ENCODE measurements at regions of chr4 and their contacts with region 1.

Region 1: GRCh38 chr4:48499551-48500066 is 9.6 kb downstream of the ZAR1 start:
- DNase-seq: no peak
- H3K4me3 Mint-ChIP-seq: no peak overlapping the region
- H3K27ac Mint-ChIP-seq: no peak overlapping the region
- H3K4me1 Mint-ChIP-seq: peaks cover 16% of the 10 kb centered on the region
- H3K27me3 Mint-ChIP-seq: no peaks in the 10 kb centered on the region

Region 2: GRCh38 chr4:48041535-48042137 is 458.0 kb before region 1 on chr4:
- CTCF ChIA-PET with region 1: no interaction called
- intact Hi-C with region 1: loop called (anchors 5 kb)
- DNase-seq: no peak
- H3K4me3 Mint-ChIP-seq: no peak overlapping the region
- H3K27ac Mint-ChIP-seq: no peak overlapping the region
- H3K4me1 Mint-ChIP-seq: peaks cover 72% of the 10 kb centered on the region
- H3K27me3 Mint-ChIP-seq: no peaks in the 10 kb centered on the region

Region 3: GRCh38 chr4:48429709-48430474 is 69.7 kb before region 1 on chr4:
- CTCF ChIA-PET with region 1: no interaction called
- intact Hi-C with region 1: loop called (anchors 1 kb)
- DNase-seq: peak; percentile 16
- H3K4me3 Mint-ChIP-seq: no peak overlapping the region
- H3K27ac Mint-ChIP-seq: no peak overlapping the region
- H3K4me1 Mint-ChIP-seq: peaks cover 49% of the 10 kb centered on the region
- H3K27me3 Mint-ChIP-seq: no peaks in the 10 kb centered on the region

Region 4: GRCh38 chr4:48898733-48899431 is 399.3 kb after region 1 on chr4:
- CTCF ChIA-PET with region 1: no interaction called
- intact Hi-C with region 1: loop called (anchors 2 kb)
- DNase-seq: no peak
- H3K4me3 Mint-ChIP-seq: peak overlapping the region; percentile 16
- H3K27ac Mint-ChIP-seq: peak overlapping the region; percentile 77
- H3K4me1 Mint-ChIP-seq: peaks cover 35% of the 10 kb centered on the region
- H3K27me3 Mint-ChIP-seq: no peaks in the 10 kb centered on the region

Measured in activated naive CD4-positive, alpha-beta T cell treated with anti-CD3 and anti-CD28 coated beads for 36 hours (primary cell).